ENCODE measurements at regions of chr12 and their contacts with region 1.

Region 1: DNA sequence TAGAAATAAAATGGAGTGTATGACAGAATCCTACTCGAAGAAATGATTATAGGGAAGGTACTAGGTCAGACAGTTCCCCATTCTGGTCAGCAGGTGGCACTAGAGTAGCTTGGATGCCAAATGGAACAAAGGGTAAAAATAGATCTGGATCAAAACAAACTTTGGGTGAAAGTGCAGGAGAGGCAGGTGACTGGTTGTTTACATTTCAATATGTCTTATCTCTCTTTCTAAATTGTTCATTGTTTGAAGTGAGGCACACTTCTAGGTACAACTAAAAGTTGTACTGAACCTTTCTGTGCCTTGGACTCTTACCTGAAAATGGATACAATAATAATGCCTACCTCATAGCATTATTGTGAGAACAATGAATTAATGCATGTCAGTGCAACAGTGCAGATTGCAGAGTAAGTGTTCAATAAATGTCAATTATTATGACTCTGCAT is 62.0 kb upstream of the OSBPL8 start:
- DNase-seq: peak; percentile 70 to 75
- H3K4me3 ChIP-seq: no peak overlapping the region
- H3K27ac ChIP-seq: no peak overlapping the region
- H3K4me1 ChIP-seq: no peaks in the 10 kb centered on the region
- H3K27me3 ChIP-seq: no peaks in the 10 kb centered on the region
- CTCF ChIP-seq: peak; percentile 93 to 94

Region 2: DNA sequence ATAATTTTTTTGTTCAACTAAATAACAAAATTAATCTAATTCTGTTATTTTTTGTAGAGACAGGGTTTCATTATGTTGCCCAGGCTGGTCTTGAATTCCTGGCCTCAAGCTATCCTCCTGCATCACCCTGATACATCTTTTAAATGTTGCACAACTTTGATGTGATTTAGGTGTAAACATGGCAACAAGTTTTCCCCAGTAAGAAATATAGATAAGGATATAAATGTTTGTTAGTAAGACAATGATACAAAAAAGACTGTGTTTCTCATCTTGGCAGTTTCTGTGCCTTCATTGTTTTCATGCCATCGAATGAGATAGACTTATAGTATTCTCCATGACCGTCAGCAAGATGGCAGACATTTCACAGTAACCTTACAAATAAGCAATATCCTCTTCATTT is 17.5 kb before region 1 on chr12:
- intact Hi-C with region 1: no loop called
- DNase-seq: no peak
- H3K4me3 ChIP-seq: no peak overlapping the region
- H3K27ac ChIP-seq: no peak overlapping the region
- H3K4me1 ChIP-seq: no peaks in the 10 kb centered on the region
- H3K27me3 ChIP-seq: no peaks in the 10 kb centered on the region
- CTCF ChIP-seq: no peak

Region 3: GRCh38 chr12:76792828-76793227 is 171.2 kb after region 1 on chr12:
- intact Hi-C with region 1: loop called (anchors 2 kb)
- DNase-seq: no peak
- H3K4me3 ChIP-seq: no peak overlapping the region
- H3K27ac ChIP-seq: no peak overlapping the region
- H3K4me1 ChIP-seq: peaks cover 0 to 32% (median 2%) of the 10 kb centered on the region in 4 donors
- H3K27me3 ChIP-seq: no peaks in the 10 kb centered on the region
- CTCF ChIP-seq: no peak

Region 4: GRCh38 chr12:77010691-77011548 is 389.3 kb after region 1 on chr12:
- intact Hi-C with region 1: loop called (anchors 5 kb)
- DNase-seq: peak; percentile 68 to 80
- H3K4me3 ChIP-seq: no peak overlapping the region
- H3K27ac ChIP-seq: no peak overlapping the region
- H3K4me1 ChIP-seq: peaks cover 0 to 5% (median 2%) of the 10 kb centered on the region in 4 donors
- H3K27me3 ChIP-seq: no peaks in the 10 kb centered on the region
- CTCF ChIP-seq: peak; percentile 74 to 94